ENCODE measurements at regions of chr7 and their contacts with region 1.

Region 1: DNA sequence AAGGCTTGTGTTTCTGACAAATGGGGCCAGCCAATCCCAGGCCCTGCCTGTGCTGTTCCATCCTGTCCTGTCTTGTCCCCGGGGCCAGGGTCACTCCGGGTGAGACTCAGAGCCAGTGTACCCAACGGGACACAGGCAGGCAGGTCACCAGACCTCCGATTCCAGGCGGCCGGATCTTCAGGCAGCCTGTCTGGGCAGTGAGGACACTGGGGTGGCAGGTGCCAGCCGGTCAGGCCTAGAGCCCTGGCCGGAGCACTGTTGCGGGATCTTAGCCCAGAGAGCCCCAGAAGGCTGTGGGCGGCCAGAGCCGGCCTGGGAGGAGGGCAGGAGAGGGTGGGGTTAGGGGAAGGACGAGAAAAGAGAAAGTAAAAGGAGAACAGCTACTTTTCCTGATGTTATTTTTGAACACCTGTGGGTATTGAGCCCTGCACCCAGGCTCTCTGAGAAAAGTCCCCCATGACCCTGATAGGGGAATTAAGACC is 134.3 kb upstream of the TNRC18 start:
- DNase-seq: no peak
- H3K4me3 ChIP-seq: no peak overlapping the region
- H3K4me3 Mint-ChIP-seq: no peak overlapping the region
- H3K27ac Mint-ChIP-seq: peak overlapping the region; percentile 81
- H3K4me1 ChIP-seq: peaks cover 46% of the 10 kb centered on the region
- H3K4me1 Mint-ChIP-seq: peaks cover 13% of the 10 kb centered on the region
- H3K27me3 ChIP-seq: no peaks in the 10 kb centered on the region
- H3K27me3 Mint-ChIP-seq: no peaks in the 10 kb centered on the region
- CTCF ChIP-seq: no peak

Region 2: DNA sequence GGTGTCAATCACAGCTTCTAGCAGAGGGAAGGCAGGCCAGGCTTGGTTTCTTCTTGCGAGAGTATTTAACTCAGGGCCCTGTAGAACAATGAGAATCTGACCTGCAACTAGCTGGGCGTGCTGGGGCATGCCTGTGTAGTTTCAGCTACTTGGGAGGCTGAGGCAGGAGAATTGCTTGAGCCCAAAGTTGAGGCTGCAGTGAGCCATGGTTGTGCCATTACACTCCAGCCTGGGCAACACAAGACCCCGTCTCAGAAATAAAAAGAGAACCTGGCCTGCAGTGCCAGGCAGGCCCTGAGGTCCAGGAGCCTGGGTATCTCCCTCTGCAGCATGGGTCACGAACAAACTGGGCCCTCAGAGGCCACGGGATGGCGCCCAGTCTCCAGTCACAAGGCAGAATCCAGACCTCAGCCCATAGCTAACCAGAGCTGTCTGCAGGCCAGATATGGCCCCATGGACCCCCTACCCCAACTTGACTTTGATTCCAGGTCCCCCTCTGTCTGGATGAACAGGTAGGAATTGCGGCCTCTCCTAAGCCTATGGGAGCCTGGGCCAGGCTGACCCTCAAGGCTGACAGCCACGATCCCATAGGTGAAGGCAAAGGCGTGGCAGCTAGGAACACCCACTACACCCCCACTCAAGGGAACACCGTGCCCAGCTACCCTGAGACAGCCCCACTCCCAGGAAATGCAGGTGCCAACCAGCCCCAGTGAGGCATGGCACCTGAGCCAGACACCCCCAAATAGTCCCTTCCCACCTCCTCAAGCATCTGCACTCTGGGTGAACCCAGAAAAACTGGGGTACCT is 31.7 kb before region 1 on chr7:
- CTCF ChIA-PET with region 1: interaction called, 11 read pairs
- POLR2A ChIA-PET with region 1: interaction called, 11 read pairs
- intact Hi-C with region 1: no loop called
- DNase-seq: peak; percentile 62 to 79
- H3K4me3 ChIP-seq: no peak overlapping the region
- H3K4me3 Mint-ChIP-seq: peak overlapping the region; percentile 92
- H3K27ac Mint-ChIP-seq: peak overlapping the region; percentile 93
- H3K4me1 ChIP-seq: peaks cover 20% of the 10 kb centered on the region
- H3K4me1 Mint-ChIP-seq: peaks cover 18% of the 10 kb centered on the region
- H3K27me3 ChIP-seq: no peaks in the 10 kb centered on the region
- H3K27me3 Mint-ChIP-seq: no peaks in the 10 kb centered on the region
- CTCF ChIP-seq: no peak

Region 3: DNA sequence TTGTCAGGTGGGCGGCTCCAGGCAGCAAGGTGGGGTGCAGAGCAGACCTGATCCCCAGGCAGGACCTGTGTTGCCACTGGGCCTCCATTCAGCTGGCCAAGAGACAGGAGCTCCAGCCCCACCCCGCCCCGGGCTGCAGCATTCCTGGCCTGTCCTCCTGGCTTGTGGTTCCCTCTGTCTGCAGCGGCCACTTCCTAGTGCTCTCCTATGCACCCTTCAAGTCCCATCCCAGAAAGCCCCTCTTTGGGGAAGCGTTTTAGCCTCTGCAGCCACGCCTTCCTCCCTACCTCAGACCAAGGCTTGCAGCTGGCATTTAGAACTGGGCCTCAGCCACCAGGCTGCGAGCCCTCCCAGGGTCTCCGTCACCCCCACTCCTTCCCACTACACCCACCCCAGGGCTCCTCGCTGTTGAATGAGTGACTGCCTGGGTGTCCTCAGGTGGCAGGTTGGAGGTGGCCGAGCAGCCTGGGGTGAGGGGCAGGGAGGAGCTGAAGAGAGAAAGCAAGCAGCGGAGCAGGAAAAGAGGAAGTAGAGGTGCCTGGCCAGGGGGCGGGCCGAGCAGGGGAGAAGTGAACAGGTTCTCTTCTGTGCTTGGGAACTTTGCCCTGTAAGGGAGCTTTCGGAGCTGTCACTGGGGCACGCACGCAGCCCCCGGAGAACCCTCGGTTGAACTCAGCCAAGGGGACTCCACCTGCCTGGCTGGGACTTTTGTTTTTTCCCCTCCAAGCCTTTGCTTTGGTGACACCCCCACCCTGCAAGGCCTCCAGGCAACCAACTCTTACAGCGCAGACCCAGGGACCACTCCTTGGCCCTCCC is 25.2 kb before region 1 on chr7:
- CTCF ChIA-PET with region 1: interaction called, 15 read pairs
- POLR2A ChIA-PET with region 1: interaction called, 5 read pairs
- intact Hi-C with region 1: no loop called
- DNase-seq: peak; percentile 81 to 92
- H3K4me3 ChIP-seq: peak overlapping the region; percentile 25
- H3K4me3 Mint-ChIP-seq: peak overlapping the region; percentile 92
- H3K27ac Mint-ChIP-seq: peak overlapping the region; percentile 79
- H3K4me1 ChIP-seq: peaks cover 50% of the 10 kb centered on the region
- H3K4me1 Mint-ChIP-seq: peaks cover 43% of the 10 kb centered on the region
- H3K27me3 ChIP-seq: no peaks in the 10 kb centered on the region
- H3K27me3 Mint-ChIP-seq: no peaks in the 10 kb centered on the region
- CTCF ChIP-seq: no peak

Region 4: DNA sequence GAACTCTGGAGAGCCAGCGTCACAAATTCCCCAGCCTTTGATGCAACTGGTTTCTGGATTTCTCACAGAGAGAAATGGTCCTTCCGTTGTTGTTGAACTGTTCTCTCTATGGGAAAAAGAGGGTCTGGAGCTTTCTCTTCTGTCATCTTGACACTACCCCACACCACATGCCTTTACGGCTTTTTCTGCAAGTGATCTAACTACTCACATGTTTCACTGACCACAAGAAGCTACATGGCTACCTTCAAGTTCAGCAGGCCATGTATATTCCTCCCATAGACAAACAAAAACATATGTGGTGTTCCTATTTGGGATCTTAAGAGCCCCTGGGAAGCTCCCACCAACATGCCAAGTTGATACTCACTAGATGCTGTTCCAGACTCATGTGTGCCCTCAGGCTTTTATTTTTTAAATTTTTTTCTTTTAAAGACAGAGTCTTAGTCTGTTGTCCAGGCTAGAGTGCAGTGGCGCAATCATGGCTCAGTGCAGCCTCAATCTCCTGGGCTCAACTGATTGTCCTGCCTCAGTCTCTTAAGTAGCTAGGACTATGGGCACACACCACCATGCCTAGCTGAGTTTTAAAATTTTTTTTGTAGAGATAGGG is 151.5 kb after region 1 on chr7:
- CTCF ChIA-PET with region 1: no interaction called
- POLR2A ChIA-PET with region 1: no interaction called
- intact Hi-C with region 1: no loop called
- DNase-seq: no peak
- H3K4me3 ChIP-seq: no peak overlapping the region
- H3K4me3 Mint-ChIP-seq: no peak overlapping the region
- H3K27ac Mint-ChIP-seq: no peak overlapping the region
- H3K4me1 ChIP-seq: peaks cover 10% of the 10 kb centered on the region
- H3K4me1 Mint-ChIP-seq: peaks cover 6% of the 10 kb centered on the region
- H3K27me3 ChIP-seq: no peaks in the 10 kb centered on the region
- H3K27me3 Mint-ChIP-seq: no peaks in the 10 kb centered on the region
- CTCF ChIP-seq: no peak

Measured in Caco-2 (cell line).